ENCODE measurements at regions of chr22 and their contacts with region 1.

Region 1: DNA sequence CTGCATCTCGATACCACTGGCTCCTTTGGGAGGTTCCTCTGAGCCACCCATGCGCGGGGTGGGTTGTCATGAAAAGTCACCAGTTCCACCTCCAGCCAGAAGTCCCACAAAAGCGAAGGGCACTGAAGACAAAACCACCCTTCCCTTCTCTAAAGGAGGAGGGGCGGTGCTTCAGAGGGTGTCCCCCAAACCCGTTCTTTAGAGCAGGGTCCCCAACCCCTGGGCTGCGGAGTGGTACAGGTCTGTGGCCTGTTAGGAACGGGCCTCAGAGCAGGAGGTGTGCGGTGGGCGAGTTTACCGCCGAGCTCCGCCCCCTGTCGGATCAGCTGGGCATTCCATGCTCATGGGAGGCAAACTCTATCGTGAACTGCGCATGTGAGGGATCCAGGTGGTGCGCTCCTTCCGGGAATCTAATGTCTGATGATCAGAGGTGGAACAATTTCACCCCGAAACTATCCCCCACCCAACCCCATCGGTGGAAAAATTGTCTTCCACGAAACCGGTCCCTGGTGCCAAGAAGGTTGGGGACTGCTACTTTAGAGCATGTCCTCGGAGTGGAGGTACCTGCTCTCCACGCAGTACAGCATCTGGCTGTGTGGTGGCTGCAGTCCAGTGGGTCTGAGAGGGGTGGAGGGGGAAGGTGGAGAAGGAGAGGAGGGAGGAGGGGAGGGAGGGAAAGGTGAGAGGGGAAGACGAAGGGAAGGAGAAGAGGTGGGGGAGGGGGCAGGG is 72.9 kb upstream of the SEPTIN5 start:
- DNase-seq: peak; percentile 34
- H3K4me3 ChIP-seq: peak overlapping the region in 2 of 3 experiments; percentile 29 to 43
- H3K27ac ChIP-seq: no peak overlapping the region
- H3K4me1 ChIP-seq: peaks cover 3% of the 10 kb centered on the region
- H3K27me3 ChIP-seq: no peaks in the 10 kb centered on the region
- CTCF ChIP-seq: peak; percentile 50 to 71

Region 2: GRCh38 chr22:19488884-19489843 is 152.3 kb before region 1 on chr22:
- CTCF ChIA-PET with region 1: no interaction called
- dilution Hi-C with region 1: loop called (anchors 5 kb)
- in situ Hi-C with region 1: no loop called
- intact Hi-C with region 1: no loop called
- DNase-seq: no peak
- H3K4me3 ChIP-seq: no peak overlapping the region
- H3K27ac ChIP-seq: no peak overlapping the region
- H3K4me1 ChIP-seq: no peaks in the 10 kb centered on the region
- H3K27me3 ChIP-seq: no peaks in the 10 kb centered on the region
- CTCF ChIP-seq: peak in 1 of 2 donors; percentile 36

Region 3: DNA sequence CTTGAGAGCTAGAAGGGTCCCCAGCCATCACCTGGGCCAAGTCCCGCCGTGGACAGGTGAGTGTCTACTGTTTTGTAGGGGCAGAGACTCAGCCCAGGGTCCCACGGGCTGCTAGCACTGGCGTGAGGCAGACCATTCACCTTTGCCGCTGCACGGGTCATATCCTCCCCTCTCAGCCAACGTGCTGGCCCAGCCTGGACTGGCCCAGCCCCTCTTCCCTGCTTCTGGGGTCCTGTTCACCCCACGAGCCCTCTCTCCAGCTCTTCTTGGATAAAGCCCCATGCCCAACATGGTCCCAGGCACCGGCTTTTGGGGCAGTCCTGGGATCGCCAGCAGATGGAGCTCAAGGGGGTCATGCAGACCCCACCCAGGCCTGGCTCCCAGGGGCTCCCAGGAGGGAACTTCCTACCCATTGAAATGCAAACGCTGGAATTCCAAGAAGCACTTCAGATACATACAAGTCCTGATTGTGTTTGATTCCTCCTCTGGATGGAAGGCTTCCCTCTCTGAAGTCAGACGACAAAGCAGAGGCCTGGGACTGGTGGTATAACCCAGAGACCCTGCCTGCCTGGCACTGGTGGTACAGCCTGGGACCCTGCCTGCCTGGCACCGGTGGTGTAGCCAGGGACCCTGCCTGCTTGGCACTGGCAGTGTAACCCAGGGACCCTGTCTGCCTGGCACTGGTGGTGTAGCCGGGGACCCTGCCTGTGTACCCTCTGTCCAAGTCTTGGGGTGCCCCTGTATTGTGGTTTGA is 63.9 kb after region 1 on chr22:
- CTCF ChIA-PET with region 1: no interaction called
- dilution Hi-C with region 1: loop called (anchors 5 kb)
- in situ Hi-C with region 1: loop called in 1 of 2 experiments (anchors 10 kb)
- intact Hi-C with region 1: no loop called
- DNase-seq: no peak
- H3K4me3 ChIP-seq: no peak overlapping the region
- H3K27ac ChIP-seq: no peak overlapping the region
- H3K4me1 ChIP-seq: no peaks in the 10 kb centered on the region
- H3K27me3 ChIP-seq: no peaks in the 10 kb centered on the region
- CTCF ChIP-seq: no peak

Region 4: DNA sequence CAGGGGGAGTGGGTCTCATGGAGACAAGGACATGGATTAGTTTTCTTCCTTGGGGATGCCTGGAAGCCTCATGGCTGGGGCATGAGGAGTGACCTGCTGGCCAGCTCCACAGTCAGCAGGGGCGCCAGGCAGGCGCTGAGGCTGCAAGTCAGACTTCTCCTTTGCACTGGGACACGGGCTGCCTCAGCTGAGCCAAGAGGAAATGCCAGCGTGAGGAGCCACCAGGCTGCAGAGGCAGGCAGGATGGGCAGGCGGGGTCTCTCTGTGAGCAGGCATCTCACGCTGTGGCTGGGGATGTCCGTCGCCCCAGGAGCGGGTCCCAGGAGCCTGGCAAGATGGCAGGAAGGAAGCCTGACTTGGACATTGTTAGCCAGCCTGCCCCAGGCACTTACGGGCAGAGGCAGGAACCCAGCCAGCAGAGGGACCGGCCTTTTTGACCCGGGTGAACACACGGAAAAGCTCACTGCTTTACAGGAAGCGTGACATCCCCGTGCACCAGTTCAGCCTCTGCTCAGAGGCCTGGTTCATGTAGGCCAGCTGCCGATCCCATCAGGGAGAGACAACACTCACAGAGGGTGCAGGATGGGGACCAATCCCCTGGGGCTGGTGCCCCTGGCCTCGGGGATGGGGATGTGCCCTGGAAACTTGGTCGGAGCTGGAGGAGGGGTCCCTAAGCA is 203.1 kb after region 1 on chr22:
- CTCF ChIA-PET with region 1: no interaction called
- dilution Hi-C with region 1: no loop called
- in situ Hi-C with region 1: no loop called
- intact Hi-C with region 1: no loop called
- DNase-seq: no peak
- H3K4me3 ChIP-seq: no peak overlapping the region
- H3K27ac ChIP-seq: no peak overlapping the region
- H3K4me1 ChIP-seq: peaks cover 29% of the 10 kb centered on the region
- H3K27me3 ChIP-seq: no peaks in the 10 kb centered on the region
- CTCF ChIP-seq: peak in 1 of 2 donors; percentile 13

Measured in mammary epithelial cell (primary cell).